ENCODE measurements at regions of chr13 and their contacts with region 1.

Region 1: DNA sequence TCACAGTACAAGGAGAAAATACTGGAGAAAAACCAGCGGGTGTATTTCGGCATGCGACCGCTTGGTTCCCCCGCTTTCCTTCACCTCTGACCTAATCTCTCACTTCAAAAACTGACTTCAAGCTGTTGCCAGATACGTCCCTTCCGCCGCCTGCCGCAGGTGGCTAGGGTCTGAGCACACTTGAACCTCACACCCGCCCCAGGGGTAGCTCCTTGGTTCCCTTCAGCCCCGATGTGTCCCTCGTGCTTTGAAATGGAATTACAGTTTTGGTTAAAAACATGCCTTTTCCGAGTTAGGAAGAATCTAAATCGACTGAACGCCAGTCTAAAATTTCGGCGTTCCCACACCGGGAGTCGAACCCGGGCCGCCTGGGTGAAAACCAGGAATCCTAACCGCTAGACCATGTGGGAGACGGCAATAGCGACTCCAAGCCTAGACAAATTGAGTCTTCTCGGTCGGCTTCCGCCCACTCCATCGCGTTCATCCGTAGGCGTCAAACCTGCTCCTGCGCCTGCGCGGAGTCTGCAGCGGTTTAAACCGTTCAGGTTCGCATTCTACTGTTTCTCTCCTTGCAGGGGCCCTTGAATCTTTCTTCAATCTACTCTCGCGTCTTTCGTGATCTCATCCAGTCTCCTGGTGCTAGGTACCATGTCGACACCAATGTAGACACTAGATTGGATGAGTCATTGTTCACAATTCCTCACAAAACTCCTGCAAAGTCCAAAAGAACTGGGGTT is 71.5 kb downstream of the NUFIP1 start:
- DNase-seq: peak; percentile 95 to 99 (median 98)
- ATAC-seq: peak; percentile 78
- H3K4me3 ChIP-seq: peak overlapping the region; percentile 54 to 66
- H3K4me3 Mint-ChIP-seq: no peak overlapping the region
- H3K27ac ChIP-seq: peak overlapping the region; percentile 66 to 90
- H3K27ac Mint-ChIP-seq: no peak overlapping the region
- H3K4me1 ChIP-seq: peaks cover 7% of the 10 kb centered on the region
- H3K4me1 Mint-ChIP-seq: peaks cover 14% of the 10 kb centered on the region
- H3K27me3 ChIP-seq: no peaks in the 10 kb centered on the region
- H3K27me3 Mint-ChIP-seq: no peaks in the 10 kb centered on the region
- CTCF ChIP-seq: peak; percentile 39

Region 2: DNA sequence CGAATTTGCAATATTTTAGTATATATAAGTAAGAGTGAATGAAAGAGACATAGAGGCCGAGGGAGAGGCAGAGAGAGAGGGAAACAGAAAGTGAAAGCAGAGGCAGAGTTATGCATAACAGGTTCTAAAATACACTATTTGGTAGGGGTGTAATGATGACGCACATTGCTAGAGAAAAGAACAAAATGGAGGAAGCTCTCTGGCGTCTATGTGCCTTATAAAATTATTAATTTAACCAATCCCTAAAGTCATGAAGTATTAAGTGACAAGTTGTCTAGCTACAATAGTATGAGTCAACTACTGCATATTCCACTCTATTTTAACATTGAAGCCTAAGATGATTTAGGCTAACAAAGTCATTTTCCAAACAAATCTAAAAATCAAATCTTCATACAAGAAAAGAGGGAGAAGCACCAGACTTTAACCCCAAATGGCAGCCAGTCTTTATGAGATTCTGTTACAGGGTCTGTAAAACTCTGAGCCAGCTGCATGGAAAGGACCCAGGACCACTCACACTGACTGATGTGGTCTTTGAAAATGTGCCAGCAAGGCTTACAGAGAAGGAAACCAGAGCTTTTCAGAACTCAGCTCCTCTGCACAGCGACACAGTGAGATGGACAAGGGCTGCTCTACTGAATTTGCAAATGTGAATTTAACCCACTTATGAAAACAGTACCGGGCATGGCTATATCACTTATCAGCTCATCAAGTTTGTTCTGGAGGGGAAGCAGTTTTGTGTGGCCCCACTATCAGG is 643.1 kb before region 1 on chr13:
- CTCF ChIA-PET with region 1: no interaction called
- POLR2A ChIA-PET with region 1: no interaction called
- intact Hi-C with region 1: loop called (anchors 5 kb)
- DNase-seq: peak in 8 of 9 experiments; percentile 17 to 91 (median 37)
- ATAC-seq: peak; percentile 92
- H3K4me3 ChIP-seq: peak overlapping the region; percentile 34 to 41
- H3K4me3 Mint-ChIP-seq: peak overlapping the region; percentile 73
- H3K27ac ChIP-seq: peak overlapping the region; percentile 81 to 96
- H3K27ac Mint-ChIP-seq: peak overlapping the region; percentile 98
- H3K4me1 ChIP-seq: peaks cover 35% of the 10 kb centered on the region
- H3K4me1 Mint-ChIP-seq: peaks cover 51% of the 10 kb centered on the region
- H3K27me3 ChIP-seq: no peaks in the 10 kb centered on the region
- H3K27me3 Mint-ChIP-seq: no peaks in the 10 kb centered on the region
- CTCF ChIP-seq: no peak

Region 3: DNA sequence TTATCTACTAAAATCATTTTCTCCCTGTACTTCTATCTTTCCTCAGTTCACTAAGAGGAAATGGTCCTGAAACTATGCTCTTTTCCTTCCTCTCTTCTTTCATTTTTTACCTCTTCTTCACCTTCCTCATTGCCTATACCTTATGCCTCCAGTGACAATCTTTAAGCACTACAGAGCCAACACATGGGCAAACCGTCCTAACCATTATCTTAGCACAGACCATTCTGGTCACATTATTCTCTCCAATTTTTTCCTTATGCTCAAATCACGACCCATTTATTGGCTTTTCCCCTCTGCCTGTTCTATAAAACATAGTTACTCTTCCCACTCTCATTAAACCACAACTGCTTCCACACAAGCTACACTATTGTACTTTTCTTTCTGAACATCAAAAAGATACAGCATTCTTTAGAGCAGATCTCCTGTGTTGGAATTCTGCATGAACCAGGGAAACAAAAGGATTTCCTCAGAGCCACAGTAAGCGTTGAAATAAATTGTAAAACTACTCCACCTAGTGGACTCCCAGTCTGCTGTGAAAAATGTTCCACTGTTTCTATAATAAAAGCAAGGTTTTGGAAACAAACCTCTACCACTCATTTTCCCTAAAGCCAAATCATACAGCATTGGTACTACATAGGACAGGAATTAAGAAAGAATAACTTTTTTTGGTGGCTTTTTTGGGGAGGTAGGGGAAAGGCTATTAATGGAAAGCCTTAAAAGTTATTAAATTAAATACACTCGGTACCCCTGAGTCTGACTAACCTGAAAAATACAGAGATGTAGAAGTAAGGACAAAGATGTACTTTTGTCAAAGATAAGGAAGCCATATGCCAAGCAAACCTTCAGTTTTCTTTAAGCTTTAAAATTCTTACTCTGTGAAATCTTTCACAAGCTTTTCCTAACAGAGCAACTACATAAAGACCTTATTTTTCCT is 52.1 kb after region 1 on chr13:
- CTCF ChIA-PET with region 1: interaction called, 4 read pairs
- POLR2A ChIA-PET with region 1: interaction called, 4 read pairs
- intact Hi-C with region 1: loop called (anchors 1 to 5 kb)
- DNase-seq: peak in 2 of 9 experiments; percentile 32 to 50
- ATAC-seq: no peak
- H3K4me3 ChIP-seq: no peak overlapping the region
- H3K4me3 Mint-ChIP-seq: no peak overlapping the region
- H3K27ac ChIP-seq: no peak overlapping the region
- H3K27ac Mint-ChIP-seq: no peak overlapping the region
- H3K4me1 ChIP-seq: no peaks in the 10 kb centered on the region
- H3K4me1 Mint-ChIP-seq: no peaks in the 10 kb centered on the region
- H3K27me3 ChIP-seq: no peaks in the 10 kb centered on the region
- H3K27me3 Mint-ChIP-seq: no peaks in the 10 kb centered on the region
- CTCF ChIP-seq: peak; percentile 67

Region 4: GRCh38 chr13:45310341-45311125 is 392.8 kb after region 1 on chr13:
- CTCF ChIA-PET with region 1: no interaction called
- POLR2A ChIA-PET with region 1: no interaction called
- intact Hi-C with region 1: loop called in 1 of 2 experiments (anchors 2 kb)
- DNase-seq: no peak
- ATAC-seq: peak; percentile 15
- H3K4me3 ChIP-seq: peak overlapping the region; percentile 53 to 59
- H3K4me3 Mint-ChIP-seq: peak overlapping the region; percentile 85
- H3K27ac ChIP-seq: no peak overlapping the region
- H3K27ac Mint-ChIP-seq: no peak overlapping the region
- H3K4me1 ChIP-seq: peaks cover 11% of the 10 kb centered on the region
- H3K4me1 Mint-ChIP-seq: peaks cover 21% of the 10 kb centered on the region
- H3K27me3 ChIP-seq: peaks cover 0 to 5% of the 10 kb centered on the region in 2 experiments
- H3K27me3 Mint-ChIP-seq: peaks cover 4% of the 10 kb centered on the region
- CTCF ChIP-seq: no peak

Region 5: GRCh38 chr13:45464687-45465453 is 547.1 kb after region 1 on chr13 and contains the start of gene COG3:
- CTCF ChIA-PET with region 1: no interaction called
- POLR2A ChIA-PET with region 1: no interaction called
- intact Hi-C with region 1: loop called in 1 of 2 experiments (anchors 1 kb)
- DNase-seq: peak; percentile 86 to 98 (median 94)
- ATAC-seq: peak; percentile 94
- H3K4me3 ChIP-seq: peak within 1 kb of the TSS; percentile 77 to 85
- H3K4me3 Mint-ChIP-seq: peak within 1 kb of the TSS; percentile 92
- H3K27ac ChIP-seq: peak within 1 kb of the TSS; percentile 82 to 95
- H3K27ac Mint-ChIP-seq: peak within 1 kb of the TSS; percentile 91
- H3K4me1 ChIP-seq: peaks cover 38% of the 10 kb centered on the region
- H3K4me1 Mint-ChIP-seq: peaks cover 49% of the 10 kb centered on the region
- H3K27me3 ChIP-seq: no peaks in the 10 kb centered on the region
- H3K27me3 Mint-ChIP-seq: no peaks in the 10 kb centered on the region
- CTCF ChIP-seq: peak; percentile 6
- total RNA-seq, gene COG3: 45.9 to 47.6 TPM